ENCODE measurements at regions of chr4 and their contacts with region 1.

Region 1: DNA sequence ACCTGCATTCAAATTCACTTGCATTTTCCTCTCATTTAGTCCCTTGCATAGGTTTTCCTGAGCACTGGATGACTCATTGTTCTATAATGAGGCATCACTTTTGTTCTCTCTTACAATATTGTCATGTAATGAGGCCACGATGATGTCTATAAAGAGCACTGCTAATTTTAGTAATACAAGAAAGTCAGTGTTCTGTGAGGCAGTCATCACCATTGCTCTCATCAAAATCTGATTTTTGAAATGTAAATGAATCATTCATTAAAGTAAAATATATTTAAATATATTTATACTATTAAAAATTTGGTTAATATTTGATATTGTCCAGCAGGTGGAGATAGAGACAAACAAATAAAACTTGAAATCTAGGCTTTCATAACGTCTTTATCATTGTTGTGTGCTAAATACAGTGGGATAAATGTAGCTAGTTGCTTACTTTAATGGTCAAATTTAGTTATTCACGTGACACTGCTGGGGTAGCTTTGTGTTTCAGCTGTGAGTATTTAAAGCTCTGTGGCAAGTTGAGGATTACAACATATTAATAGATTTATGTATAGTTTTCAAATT is 15.4 kb downstream of the HMGB2 start:
- DNase-seq: peak in 4 of 9 donors; percentile 17 to 43 (median 34)
- ATAC-seq: peak; percentile 64
- H3K4me3 ChIP-seq: no peak overlapping the region
- H3K4me3 Mint-ChIP-seq: no peak overlapping the region
- H3K27ac ChIP-seq: no peak overlapping the region
- H3K27ac Mint-ChIP-seq: no peak overlapping the region
- H3K4me1 ChIP-seq: no peaks in the 10 kb centered on the region
- H3K4me1 Mint-ChIP-seq: peaks cover 0 to 5% (median 0%) of the 10 kb centered on the region in 7 donors
- H3K27me3 ChIP-seq: no peaks in the 10 kb centered on the region
- H3K27me3 Mint-ChIP-seq: no peaks in the 10 kb centered on the region

Region 2: GRCh38 chr4:172950990-172951389 is 367.7 kb before region 1 on chr4:
- CTCF ChIA-PET with region 1: no interaction called
- POLR2A ChIA-PET with region 1: no interaction called
- intact Hi-C with region 1: no loop called
- DNase-seq: no peak
- ATAC-seq: no peak
- H3K4me3 ChIP-seq: no peak overlapping the region
- H3K4me3 Mint-ChIP-seq: no peak overlapping the region
- H3K27ac ChIP-seq: no peak overlapping the region
- H3K27ac Mint-ChIP-seq: no peak overlapping the region
- H3K4me1 ChIP-seq: no peaks in the 10 kb centered on the region
- H3K4me1 Mint-ChIP-seq: no peaks in the 10 kb centered on the region
- H3K27me3 ChIP-seq: no peaks in the 10 kb centered on the region
- H3K27me3 Mint-ChIP-seq: peaks cover 0 to 7% (median 0%) of the 10 kb centered on the region in 5 donors

Region 3: DNA sequence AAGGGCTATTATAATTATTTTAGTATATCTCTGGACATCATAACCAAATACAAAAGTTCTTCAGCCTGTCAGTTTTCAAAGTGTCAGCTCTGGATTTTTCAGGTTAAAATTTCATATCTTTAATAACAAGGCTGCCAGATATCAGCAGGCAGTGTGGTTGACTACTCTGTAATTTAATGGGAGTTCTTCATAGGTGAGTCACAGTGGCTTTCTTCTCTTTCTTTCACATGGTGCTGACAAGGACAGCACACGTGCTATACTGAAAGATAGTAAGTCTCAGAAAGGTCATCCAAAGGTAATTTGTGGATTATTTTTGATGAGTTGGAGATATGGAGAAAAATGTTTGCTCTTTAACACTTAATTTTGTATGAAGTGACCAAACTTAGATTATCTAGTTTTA is 106.9 kb before region 1 on chr4:
- CTCF ChIA-PET with region 1: no interaction called
- POLR2A ChIA-PET with region 1: no interaction called
- intact Hi-C with region 1: no loop called
- DNase-seq: no peak
- ATAC-seq: no peak
- H3K4me3 ChIP-seq: no peak overlapping the region
- H3K4me3 Mint-ChIP-seq: no peak overlapping the region
- H3K27ac ChIP-seq: no peak overlapping the region
- H3K27ac Mint-ChIP-seq: no peak overlapping the region
- H3K4me1 ChIP-seq: no peaks in the 10 kb centered on the region
- H3K4me1 Mint-ChIP-seq: peaks cover 3 to 41% (median 17%) of the 10 kb centered on the region in 7 donors
- H3K27me3 ChIP-seq: no peaks in the 10 kb centered on the region
- H3K27me3 Mint-ChIP-seq: no peaks in the 10 kb centered on the region

Region 4: GRCh38 chr4:173334085-173334772 is 15.5 kb after region 1 on chr4 and contains the start of gene HMGB2:
- CTCF ChIA-PET with region 1: interaction called, 5 read pairs
- POLR2A ChIA-PET with region 1: interaction called, 4 read pairs
- intact Hi-C with region 1: loop called (anchors 1 to 2 kb)
- DNase-seq: peak; percentile 96 to 100 (median 100)
- ATAC-seq: peak; percentile 97
- H3K4me3 ChIP-seq: peak within 1 kb of the TSS; percentile 89
- H3K4me3 Mint-ChIP-seq: peak within 1 kb of the TSS; percentile 93 to 100 (median 99)
- H3K27ac ChIP-seq: peak within 1 kb of the TSS; percentile 98
- H3K27ac Mint-ChIP-seq: peak within 1 kb of the TSS; percentile 97 to 100 (median 99)
- H3K4me1 ChIP-seq: peaks cover 7 to 18% of the 10 kb centered on the region in 2 donors
- H3K4me1 Mint-ChIP-seq: peaks cover 20 to 55% (median 30%) of the 10 kb centered on the region in 7 donors
- H3K27me3 ChIP-seq: no peaks in the 10 kb centered on the region
- H3K27me3 Mint-ChIP-seq: peaks cover 6 to 18% (median 11%) of the 10 kb centered on the region in 5 donors
- total RNA-seq, gene HMGB2: 89.3 to 542 (median 106) TPM

Region 5: DNA sequence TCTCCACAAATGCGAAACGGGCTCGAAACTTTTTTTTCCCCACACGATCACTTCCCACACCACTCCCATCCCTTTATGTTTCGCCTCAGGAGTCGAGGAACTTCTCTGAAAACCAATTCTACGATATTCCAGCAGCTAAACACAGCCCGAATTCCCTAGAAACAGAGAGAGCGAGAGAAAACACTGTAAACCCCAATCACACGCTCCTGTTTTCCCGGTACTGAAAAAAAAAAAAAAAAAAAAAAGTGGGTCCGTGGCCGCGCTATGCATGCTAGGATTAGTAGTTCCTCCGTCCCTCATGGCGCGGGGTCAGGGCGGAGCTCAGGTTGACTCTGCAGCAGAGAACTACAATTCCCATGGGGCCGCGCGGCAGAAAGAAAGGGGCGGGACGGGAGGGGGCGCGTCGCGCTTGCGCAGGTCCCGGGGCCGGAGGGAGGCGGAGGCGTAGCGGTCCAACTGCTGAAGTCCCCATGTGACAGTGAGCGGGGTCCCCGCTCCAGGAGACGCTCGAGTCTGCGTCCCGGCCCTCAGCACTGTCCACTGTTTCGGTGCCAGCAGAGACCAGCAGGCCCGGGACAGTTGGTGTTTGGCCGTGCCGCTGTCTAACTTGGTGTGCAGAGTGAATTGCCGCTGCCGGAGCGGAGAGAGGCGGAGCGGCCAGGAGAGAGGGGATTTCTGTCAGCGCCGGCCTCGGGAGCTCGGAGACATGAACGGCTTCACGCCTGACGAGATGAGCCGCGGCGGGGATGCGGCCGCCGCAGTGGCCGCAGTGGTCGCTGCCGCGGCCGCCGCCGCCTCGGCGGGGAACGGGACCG is 52.0 kb after region 1 on chr4 and contains the start of gene SAP30:
- CTCF ChIA-PET with region 1: interaction called, 10 read pairs
- POLR2A ChIA-PET with region 1: no interaction called
- intact Hi-C with region 1: no loop called
- DNase-seq: peak; percentile 88 to 97 (median 91)
- ATAC-seq: peak; percentile 91
- H3K4me3 ChIP-seq: peak within 1 kb of the TSS; percentile 99
- H3K4me3 Mint-ChIP-seq: peak within 1 kb of the TSS; percentile 89 to 100 (median 98)
- H3K27ac ChIP-seq: peak within 1 kb of the TSS; percentile 82
- H3K27ac Mint-ChIP-seq: peak within 1 kb of the TSS; percentile 88 to 99 (median 97)
- H3K4me1 ChIP-seq: peaks cover 5 to 20% of the 10 kb centered on the region in 2 donors
- H3K4me1 Mint-ChIP-seq: peaks cover 14 to 46% (median 18%) of the 10 kb centered on the region in 7 donors
- H3K27me3 ChIP-seq: peaks cover 0 to 10% of the 10 kb centered on the region in 2 donors
- H3K27me3 Mint-ChIP-seq: peaks cover 2 to 29% (median 17%) of the 10 kb centered on the region in 5 donors
- total RNA-seq, gene SAP30: 0.48 to 27.4 (median 1.1) TPM

Region 6: GRCh38 chr4:173420324-173420752 is 101.6 kb after region 1 on chr4:
- CTCF ChIA-PET with region 1: interaction called, 48 read pairs
- POLR2A ChIA-PET with region 1: interaction called, 3 read pairs
- intact Hi-C with region 1: loop called (anchors 1 kb)
- DNase-seq: peak in 5 of 9 donors; percentile 10 to 40 (median 28)
- ATAC-seq: peak; percentile 37
- H3K4me3 ChIP-seq: no peak overlapping the region
- H3K4me3 Mint-ChIP-seq: peak overlapping the region in 1 of 10 donors; percentile 21
- H3K27ac ChIP-seq: no peak overlapping the region
- H3K27ac Mint-ChIP-seq: peak overlapping the region in 4 of 9 donors; percentile 4 to 22 (median 8)
- H3K4me1 ChIP-seq: peaks cover 2 to 5% of the 10 kb centered on the region in 2 donors
- H3K4me1 Mint-ChIP-seq: peaks cover 6 to 25% (median 6%) of the 10 kb centered on the region in 7 donors
- H3K27me3 ChIP-seq: no peaks in the 10 kb centered on the region
- H3K27me3 Mint-ChIP-seq: peaks cover 0 to 6% (median 0%) of the 10 kb centered on the region in 5 donors

Region 7: GRCh38 chr4:173488656-173489055 is 169.9 kb after region 1 on chr4:
- CTCF ChIA-PET with region 1: no interaction called
- POLR2A ChIA-PET with region 1: no interaction called
- intact Hi-C with region 1: no loop called
- DNase-seq: no peak
- ATAC-seq: no peak
- H3K4me3 ChIP-seq: no peak overlapping the region
- H3K4me3 Mint-ChIP-seq: no peak overlapping the region
- H3K27ac ChIP-seq: no peak overlapping the region
- H3K27ac Mint-ChIP-seq: no peak overlapping the region
- H3K4me1 ChIP-seq: no peaks in the 10 kb centered on the region
- H3K4me1 Mint-ChIP-seq: peaks cover 0 to 24% (median 6%) of the 10 kb centered on the region in 7 donors
- H3K27me3 ChIP-seq: no peaks in the 10 kb centered on the region
- H3K27me3 Mint-ChIP-seq: peaks cover 0 to 22% (median 9%) of the 10 kb centered on the region in 5 donors

Region 8: DNA sequence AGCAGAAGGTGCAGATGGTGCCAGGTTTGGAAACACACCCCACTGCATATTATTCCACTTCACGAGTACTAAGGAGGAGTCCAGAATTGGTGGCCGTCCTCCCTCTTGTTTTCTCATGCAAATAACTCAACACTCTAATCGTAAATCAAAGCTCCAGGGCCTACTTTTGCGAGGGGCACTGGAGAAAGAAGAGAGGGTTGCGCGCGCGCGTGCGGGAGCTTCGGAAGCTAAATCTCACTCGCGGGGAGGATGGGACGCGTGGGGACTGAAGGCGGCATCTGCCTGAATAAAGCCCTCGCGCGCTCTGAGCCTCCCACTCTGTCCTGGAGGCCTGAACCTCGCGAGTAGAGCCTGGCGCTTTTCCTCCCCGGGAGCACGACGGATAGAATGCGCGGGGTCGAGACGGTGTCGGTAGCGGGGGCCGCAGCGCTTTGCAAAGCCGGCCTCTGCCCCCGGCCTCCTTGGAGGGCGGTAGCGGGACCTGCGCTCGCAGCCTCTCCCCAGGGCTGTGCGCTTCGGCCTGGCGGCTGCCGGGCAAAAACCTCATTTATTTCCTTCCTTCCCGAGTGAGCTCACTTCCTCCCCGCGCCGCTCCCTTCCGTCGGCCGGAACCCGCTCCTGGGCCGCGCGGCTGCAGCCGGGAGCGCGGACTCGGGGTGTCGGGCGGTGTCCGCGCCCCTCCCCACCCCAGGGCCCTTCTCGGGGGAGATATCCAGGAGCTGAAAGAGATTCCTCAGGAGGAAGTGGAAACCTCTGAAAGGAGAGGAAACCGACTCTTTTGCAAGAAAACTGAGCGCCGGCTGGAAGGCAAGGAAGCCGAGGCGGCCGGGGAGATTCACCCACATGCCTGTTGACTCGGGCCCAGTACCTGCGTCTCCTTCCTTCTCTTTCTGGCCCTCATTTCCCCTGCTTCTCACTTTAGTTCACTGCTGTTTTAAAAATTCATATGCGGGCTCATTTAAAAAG is 190.6 kb after region 1 on chr4:
- CTCF ChIA-PET with region 1: no interaction called
- POLR2A ChIA-PET with region 1: no interaction called
- intact Hi-C with region 1: no loop called
- DNase-seq: no peak
- ATAC-seq: peak; percentile 36
- H3K4me3 ChIP-seq: peak overlapping the region; percentile 55
- H3K4me3 Mint-ChIP-seq: peak overlapping the region; percentile 72 to 87 (median 82)
- H3K27ac ChIP-seq: no peak overlapping the region
- H3K27ac Mint-ChIP-seq: no peak overlapping the region
- H3K4me1 ChIP-seq: peaks cover 4 to 24% of the 10 kb centered on the region in 2 donors
- H3K4me1 Mint-ChIP-seq: peaks cover 16 to 49% (median 38%) of the 10 kb centered on the region in 7 donors
- H3K27me3 ChIP-seq: peaks cover 0 to 30% of the 10 kb centered on the region in 2 donors
- H3K27me3 Mint-ChIP-seq: peaks cover 86 to 95% (median 90%) of the 10 kb centered on the region in 5 donors

Region 9: GRCh38 chr4:174120446-174121295 is 801.9 kb after region 1 on chr4:
- CTCF ChIA-PET with region 1: no interaction called
- POLR2A ChIA-PET with region 1: no interaction called
- intact Hi-C with region 1: loop called in 1 of 2 experiments (anchors 5 kb)
- DNase-seq: peak in 2 of 9 donors; percentile 2 to 19
- ATAC-seq: peak; percentile 56
- H3K4me3 ChIP-seq: no peak overlapping the region
- H3K4me3 Mint-ChIP-seq: peak overlapping the region in 3 of 10 donors; percentile 14 to 63 (median 42)
- H3K27ac ChIP-seq: no peak overlapping the region
- H3K27ac Mint-ChIP-seq: peak overlapping the region in 1 of 9 donors; percentile 2
- H3K4me1 ChIP-seq: no peaks in the 10 kb centered on the region
- H3K4me1 Mint-ChIP-seq: peaks cover 0 to 5% (median 0%) of the 10 kb centered on the region in 7 donors
- H3K27me3 ChIP-seq: no peaks in the 10 kb centered on the region
- H3K27me3 Mint-ChIP-seq: peaks cover 40 to 71% (median 56%) of the 10 kb centered on the region in 5 donors